HCT116 (cell line): ENCODE measurements at regions of chr17 and their contacts with region 1.

Region 1: GRCh38 chr17:62720089-62720833 is 87.9 kb downstream of the MARCHF10 start:
- DNase-seq: no peak
- ATAC-seq: peak; percentile 89
- H3K4me3 ChIP-seq: no peak overlapping the region
- H3K27ac ChIP-seq: no peak overlapping the region
- H3K4me1 ChIP-seq: peaks cover 10 to 35% of the 10 kb centered on the region in 2 experiments; a peak in 3 of 4 replicates
- H3K27me3 ChIP-seq: no peaks in the 10 kb centered on the region
- CTCF ChIP-seq: peak; percentile 29 to 75 (median 69); a peak in 4 of 6 replicates
- POLR2A ChIP-seq: no peak
- RAD21 ChIP-seq: peak; percentile 45

Region 2: DNA sequence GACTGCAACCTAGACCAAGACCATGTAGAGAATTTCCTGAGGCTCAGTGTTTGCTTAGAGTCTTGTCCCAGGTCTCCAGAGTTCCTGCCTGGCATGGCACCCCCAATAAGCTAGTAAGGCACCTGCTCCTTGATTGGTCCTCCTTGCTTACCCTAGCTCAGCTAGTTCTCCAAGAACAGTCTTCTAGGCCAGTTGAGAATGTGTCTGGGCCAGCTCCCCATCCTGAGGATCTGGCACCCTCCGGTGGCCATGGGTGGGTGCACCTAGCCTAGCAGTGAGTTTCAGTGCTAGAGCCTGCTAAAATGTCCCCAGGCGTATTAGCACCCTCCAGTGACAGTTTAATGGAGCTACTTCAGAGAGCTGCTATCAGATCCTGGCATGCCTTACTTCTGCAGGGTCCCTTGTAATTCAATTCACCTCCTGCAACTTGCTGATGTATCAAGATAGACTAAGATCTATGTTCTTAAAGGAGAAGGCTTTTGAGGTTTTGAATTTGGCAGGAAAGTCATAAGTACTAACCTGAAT is 610.8 kb before region 1 on chr17:
- CTCF ChIA-PET with region 1: no interaction called
- POLR2A ChIA-PET with region 1: no interaction called
- RAD21 ChIA-PET with region 1: no interaction called
- intact Hi-C with region 1: no loop called
- DNase-seq: peak; percentile 95
- ATAC-seq: peak; percentile 99
- H3K4me3 ChIP-seq: no peak overlapping the region
- H3K27ac ChIP-seq: no peak overlapping the region
- H3K4me1 ChIP-seq: peaks cover 0 to 16% of the 10 kb centered on the region in 2 experiments; a peak in 2 of 4 replicates
- H3K27me3 ChIP-seq: no peaks in the 10 kb centered on the region
- CTCF ChIP-seq: peak; percentile 99 to 100 (median 99)
- POLR2A ChIP-seq: no peak
- RAD21 ChIP-seq: peak; percentile 100

Region 3: GRCh38 chr17:62614142-62614541 is 106.1 kb before region 1 on chr17:
- CTCF ChIA-PET with region 1: no interaction called
- POLR2A ChIA-PET with region 1: no interaction called
- RAD21 ChIA-PET with region 1: no interaction called
- intact Hi-C with region 1: no loop called
- DNase-seq: no peak
- ATAC-seq: no peak
- H3K4me3 ChIP-seq: no peak overlapping the region
- H3K27ac ChIP-seq: no peak overlapping the region
- H3K4me1 ChIP-seq: no peaks in the 10 kb centered on the region
- H3K27me3 ChIP-seq: no peaks in the 10 kb centered on the region
- CTCF ChIP-seq: no peak
- POLR2A ChIP-seq: no peak
- RAD21 ChIP-seq: no peak

Region 4: GRCh38 chr17:62735013-62735652 is 14.9 kb after region 1 on chr17:
- CTCF ChIA-PET with region 1: interaction called, 13 read pairs
- POLR2A ChIA-PET with region 1: interaction called, 3 read pairs
- RAD21 ChIA-PET with region 1: no interaction called
- intact Hi-C with region 1: no loop called
- DNase-seq: no peak
- ATAC-seq: no peak
- H3K4me3 ChIP-seq: no peak overlapping the region
- H3K27ac ChIP-seq: no peak overlapping the region
- H3K4me1 ChIP-seq: no peaks in the 10 kb centered on the region
- H3K27me3 ChIP-seq: no peaks in the 10 kb centered on the region
- CTCF ChIP-seq: no peak
- POLR2A ChIP-seq: no peak
- RAD21 ChIP-seq: no peak

Region 5: GRCh38 chr17:62787379-62787778 is 67.1 kb after region 1 on chr17:
- CTCF ChIA-PET with region 1: no interaction called
- POLR2A ChIA-PET with region 1: no interaction called
- RAD21 ChIA-PET with region 1: no interaction called
- intact Hi-C with region 1: no loop called
- DNase-seq: no peak
- ATAC-seq: no peak
- H3K4me3 ChIP-seq: no peak overlapping the region
- H3K27ac ChIP-seq: no peak overlapping the region
- H3K4me1 ChIP-seq: peaks cover 6 to 20% of the 10 kb centered on the region in 2 experiments
- H3K27me3 ChIP-seq: no peaks in the 10 kb centered on the region
- CTCF ChIP-seq: no peak
- POLR2A ChIP-seq: no peak
- RAD21 ChIP-seq: no peak